ENCODE measurements at regions of chr4 and their contacts with region 1.

Region 1: DNA sequence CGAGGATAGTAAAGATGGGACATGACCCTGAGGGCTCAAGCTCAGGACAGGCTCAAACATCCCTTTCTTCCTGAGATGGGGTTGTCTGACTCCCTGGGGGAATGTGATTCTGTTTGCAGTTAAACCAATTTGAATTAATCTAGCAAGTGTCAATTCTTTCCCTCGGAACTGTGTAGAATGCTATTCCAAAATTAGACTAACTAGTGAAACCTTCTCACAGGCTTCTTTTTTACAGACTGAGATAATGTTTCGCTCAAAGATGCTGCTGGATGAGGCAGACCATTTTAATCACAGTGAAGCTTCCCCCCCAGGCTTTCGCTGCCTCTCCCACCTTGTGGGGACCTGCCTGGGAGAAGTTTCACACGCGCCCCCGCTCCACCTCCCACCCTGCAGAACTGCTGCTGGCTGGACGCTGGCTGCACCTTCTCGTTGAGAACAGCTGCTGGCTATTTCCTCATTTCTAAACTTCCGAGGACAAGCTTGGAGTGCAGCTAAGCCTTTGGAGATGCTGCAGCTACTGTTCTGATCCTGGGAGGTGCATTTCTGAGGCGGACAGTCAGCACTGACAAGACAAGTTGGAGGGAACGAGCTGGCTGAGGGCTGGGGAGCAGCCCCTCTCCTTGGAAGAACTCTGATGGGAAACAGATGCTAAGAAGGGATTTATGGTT is 297.8 kb downstream of the RAPGEF2 start:
- DNase-seq: peak in 1 of 2 donors; percentile 13
- ATAC-seq: peak in 5 of 8 donors; percentile 23 to 60 (median 33)
- H3K4me3 ChIP-seq: peak overlapping the region in 7 of 10 donors; percentile 1 to 38 (median 24)
- H3K27ac ChIP-seq: peak overlapping the region; percentile 21 to 84 (median 64)
- H3K4me1 ChIP-seq: peaks cover 8 to 56% (median 29%) of the 10 kb centered on the region in 9 donors
- H3K27me3 ChIP-seq: no peaks in the 10 kb centered on the region
- CTCF ChIP-seq: no peak

Region 2: GRCh38 chr4:159212675-159213293 is 187.9 kb before region 1 on chr4:
- intact Hi-C with region 1: loop called in 1 of 10 experiments (anchors 5 kb)
- DNase-seq: peak in 1 of 2 donors; percentile 52
- ATAC-seq: peak; percentile 66 to 95 (median 88)
- H3K4me3 ChIP-seq: no peak overlapping the region
- H3K27ac ChIP-seq: peak overlapping the region in 9 of 10 donors; percentile 18 to 78 (median 60)
- H3K4me1 ChIP-seq: peaks cover 5 to 91% (median 61%) of the 10 kb centered on the region in 9 donors
- H3K27me3 ChIP-seq: no peaks in the 10 kb centered on the region
- CTCF ChIP-seq: no peak

Region 3: GRCh38 chr4:159352609-159353008 is 48.1 kb before region 1 on chr4:
- intact Hi-C with region 1: loop called in 1 of 10 experiments (anchors 5 kb)
- DNase-seq: no peak
- ATAC-seq: peak in 3 of 8 donors; percentile 34 to 52 (median 38)
- H3K4me3 ChIP-seq: no peak overlapping the region
- H3K27ac ChIP-seq: peak overlapping the region in 4 of 10 donors; percentile 3 to 49 (median 25)
- H3K4me1 ChIP-seq: peaks cover 0 to 44% (median 3%) of the 10 kb centered on the region in 9 donors
- H3K27me3 ChIP-seq: no peaks in the 10 kb centered on the region
- CTCF ChIP-seq: peak in 1 of 9 donors; percentile 8

Region 4: DNA sequence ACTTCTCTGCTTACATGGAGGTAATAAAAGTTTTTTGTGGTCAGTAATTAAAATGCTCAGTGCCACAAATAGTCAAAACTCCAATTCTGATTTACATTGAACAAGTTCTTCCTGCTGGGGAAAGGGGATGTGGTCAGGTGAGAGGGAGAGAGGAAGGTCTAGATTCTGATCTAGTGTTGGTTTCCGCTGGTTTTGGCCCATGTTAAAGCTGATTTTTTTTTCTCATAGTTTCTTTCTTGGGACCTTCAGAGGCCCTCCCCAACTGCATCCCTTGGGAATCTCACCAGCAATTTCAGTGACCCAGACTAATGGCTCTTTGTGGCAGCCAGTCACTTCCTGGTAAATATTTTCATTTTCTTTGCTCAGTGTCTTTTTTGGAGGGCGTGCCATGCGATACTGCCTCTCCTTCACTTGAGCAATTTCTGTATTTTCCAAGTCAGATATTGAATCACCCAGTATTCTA is 34.9 kb after region 1 on chr4:
- intact Hi-C with region 1: no loop called
- DNase-seq: no peak
- ATAC-seq: no peak
- H3K4me3 ChIP-seq: no peak overlapping the region
- H3K27ac ChIP-seq: peak overlapping the region in 1 of 10 donors; percentile 25
- H3K4me1 ChIP-seq: peaks cover 0 to 14% (median 0%) of the 10 kb centered on the region in 9 donors
- H3K27me3 ChIP-seq: no peaks in the 10 kb centered on the region
- CTCF ChIP-seq: no peak